PC-3 (cell line): ENCODE measurements at regions of chr17 and their contacts with region 1.

Region 1: GRCh38 chr17:78497115-78497540 is 80.1 kb downstream of the DNAH17 start:
- DNase-seq: peak; percentile 91
- ATAC-seq: peak; percentile 98
- H3K4me3 ChIP-seq: no peak overlapping the region
- H3K27ac ChIP-seq: no peak overlapping the region
- H3K4me1 ChIP-seq: no peaks in the 10 kb centered on the region
- H3K27me3 ChIP-seq: no peaks in the 10 kb centered on the region
- CTCF ChIP-seq: peak; percentile 92

Region 2: DNA sequence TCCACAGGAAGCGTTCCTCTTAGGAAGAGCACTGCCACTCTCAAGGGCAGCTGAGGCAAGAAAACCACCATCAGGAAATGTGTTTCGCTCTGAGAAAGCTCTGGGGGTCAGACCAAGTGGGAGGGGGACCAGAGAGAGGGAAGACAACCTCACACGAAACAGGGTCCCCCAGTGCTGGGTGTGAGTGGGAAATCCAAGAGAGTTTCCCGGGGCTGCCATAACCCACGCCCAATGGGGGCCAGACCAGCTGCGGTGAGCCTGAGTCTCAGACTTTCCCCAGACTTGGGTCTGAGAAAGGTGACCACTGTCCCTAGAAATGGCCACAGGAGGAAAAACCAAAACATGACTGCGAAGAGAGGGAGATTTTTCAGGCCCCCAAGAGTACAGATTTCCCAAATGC is 65.6 kb after region 1 on chr17:
- CTCF ChIA-PET with region 1: interaction called, 5 read pairs
- POLR2A ChIA-PET with region 1: no interaction called
- intact Hi-C with region 1: loop called (anchors 1 kb)
- DNase-seq: no peak
- ATAC-seq: no peak
- H3K4me3 ChIP-seq: no peak overlapping the region
- H3K27ac ChIP-seq: no peak overlapping the region
- H3K4me1 ChIP-seq: no peaks in the 10 kb centered on the region
- H3K27me3 ChIP-seq: peaks cover 77% of the 10 kb centered on the region
- CTCF ChIP-seq: no peak

Region 3: DNA sequence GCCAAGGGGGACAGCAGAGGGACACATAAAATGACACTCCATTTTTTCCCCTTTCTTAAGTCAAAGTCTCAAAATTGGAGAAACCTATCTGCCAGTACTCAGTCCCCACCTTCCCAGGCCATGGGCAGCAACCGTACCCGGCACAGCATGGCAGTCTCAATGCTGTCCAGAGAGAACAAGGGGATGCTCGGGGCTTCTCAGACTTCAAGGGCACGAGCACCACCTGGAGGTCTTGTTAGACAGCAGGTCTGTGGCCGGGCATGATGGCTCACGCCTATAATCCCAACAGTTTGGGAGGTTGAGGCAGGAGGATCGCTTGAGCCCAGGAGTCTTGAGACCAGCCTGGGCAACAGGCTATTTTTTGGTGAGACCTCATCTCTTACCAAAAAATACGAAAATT is 76.8 kb after region 1 on chr17:
- CTCF ChIA-PET with region 1: interaction called, 3 read pairs
- POLR2A ChIA-PET with region 1: no interaction called
- intact Hi-C with region 1: loop called (anchors 1 kb)
- DNase-seq: peak; percentile 54
- ATAC-seq: peak; percentile 89
- H3K4me3 ChIP-seq: no peak overlapping the region
- H3K27ac ChIP-seq: no peak overlapping the region
- H3K4me1 ChIP-seq: no peaks in the 10 kb centered on the region
- H3K27me3 ChIP-seq: peaks cover 15% of the 10 kb centered on the region; the same call in 1 of the 2 replicates
- CTCF ChIP-seq: peak; percentile 65

Region 4: DNA sequence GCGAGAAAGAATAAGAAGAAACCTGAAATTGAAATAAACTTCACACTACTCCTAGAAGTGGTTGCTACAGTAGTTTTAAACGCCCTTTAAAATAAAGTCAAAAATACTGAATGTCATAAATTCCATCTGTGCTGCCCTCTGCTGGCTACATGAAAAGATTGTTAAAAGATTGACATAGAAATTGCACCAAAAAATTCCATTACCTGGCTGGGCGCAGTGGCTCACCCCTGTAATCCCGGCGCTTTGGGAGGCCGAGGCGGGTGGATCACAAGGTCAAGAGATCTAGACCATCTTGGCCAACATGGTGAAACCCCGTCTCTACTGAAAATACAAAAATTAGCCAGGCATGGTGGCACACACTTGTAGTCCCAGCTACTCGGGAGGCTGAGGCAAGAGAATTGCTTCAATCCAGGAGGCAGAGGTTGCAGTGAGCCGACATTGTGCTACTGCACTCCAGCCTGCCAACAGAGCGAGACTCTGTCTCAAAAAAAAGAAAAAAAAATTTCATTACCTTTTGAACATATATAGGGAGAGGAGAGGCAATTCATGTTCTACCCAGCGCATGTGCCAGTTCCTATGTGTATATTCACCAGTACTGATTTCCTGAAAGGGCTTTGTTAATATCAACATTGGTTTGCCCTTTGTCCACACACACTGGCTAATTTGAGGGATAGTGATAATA is 248.4 kb after region 1 on chr17:
- CTCF ChIA-PET with region 1: no interaction called
- POLR2A ChIA-PET with region 1: no interaction called
- intact Hi-C with region 1: loop called (anchors 1 kb)
- DNase-seq: peak; percentile 65
- ATAC-seq: peak; percentile 18
- H3K4me3 ChIP-seq: no peak overlapping the region
- H3K27ac ChIP-seq: no peak overlapping the region
- H3K4me1 ChIP-seq: peaks cover 11% of the 10 kb centered on the region
- H3K27me3 ChIP-seq: no peaks in the 10 kb centered on the region
- CTCF ChIP-seq: peak; percentile 79